Aorta (tissue), 5 donors: ENCODE measurements at regions of chr1 and their contacts with region 1.

Region 1: GRCh38 chr1:186102557-186103148 is 272.4 kb downstream of the TPR start:
- DNase-seq: peak; percentile 55 to 65
- ATAC-seq: peak; percentile 84
- H3K4me3 ChIP-seq: no peak overlapping the region
- H3K27ac ChIP-seq: no peak overlapping the region
- H3K4me1 ChIP-seq: peaks cover 2 to 8% of the 10 kb centered on the region in 2 donors
- H3K27me3 ChIP-seq: no peaks in the 10 kb centered on the region

Region 2: DNA sequence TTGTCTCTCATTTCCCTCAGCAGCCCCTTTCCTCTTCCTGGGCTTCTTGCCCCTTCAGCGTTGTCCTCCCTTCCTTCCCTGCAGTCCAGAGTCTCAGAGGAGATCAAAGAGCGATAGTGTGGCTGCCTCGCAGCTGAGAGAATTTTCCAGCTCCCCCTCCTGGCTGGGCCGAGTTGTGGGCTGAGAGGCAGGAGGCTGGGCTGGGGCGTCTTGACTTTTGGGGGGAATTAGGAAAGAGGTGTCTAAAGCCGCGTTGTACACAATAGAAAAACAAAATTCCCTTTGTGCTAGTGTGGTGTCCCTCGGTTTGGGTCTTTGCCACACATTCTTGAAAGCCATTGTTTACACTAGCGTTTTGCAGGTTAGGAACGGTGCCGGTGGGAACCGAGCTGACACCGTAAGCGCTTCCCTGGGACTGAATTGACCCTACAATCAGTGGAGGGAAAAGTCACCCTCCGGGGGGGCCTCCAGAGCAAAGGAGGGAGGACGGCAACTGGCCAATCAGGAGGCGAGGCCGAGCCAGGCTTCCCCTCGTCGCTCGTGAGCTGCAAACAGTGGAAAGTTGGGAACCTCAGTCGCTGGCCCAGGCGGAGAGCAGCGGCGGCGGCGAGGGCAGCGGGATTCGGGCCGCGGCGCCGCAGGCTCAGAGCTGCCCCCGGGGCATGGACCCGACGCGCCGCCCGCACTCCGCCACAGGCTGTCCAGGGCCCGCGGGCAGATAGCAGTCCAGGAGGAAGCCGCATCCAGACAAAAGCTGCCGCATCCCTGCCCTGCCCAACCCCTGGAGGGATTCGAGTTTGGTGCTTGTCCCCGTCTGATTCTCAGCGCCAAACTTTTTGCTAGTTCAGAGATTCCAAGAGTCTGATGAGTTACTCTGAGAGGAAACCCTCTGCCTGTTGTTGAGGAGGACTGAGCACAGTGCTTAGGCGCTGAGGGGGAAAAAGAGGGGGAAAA is 368.6 kb before region 1 on chr1 and contains the start of gene HMCN1:
- intact Hi-C with region 1: loop called in 1 of 2 experiments (anchors 5 kb)
- DNase-seq: peak; percentile 89 to 93
- ATAC-seq: peak; percentile 93
- H3K4me3 ChIP-seq: peak within 1 kb of the TSS; percentile 94 to 99
- H3K27ac ChIP-seq: peak within 1 kb of the TSS; percentile 90 to 93
- H3K4me1 ChIP-seq: peaks cover 3 to 12% of the 10 kb centered on the region in 2 donors
- H3K27me3 ChIP-seq: no peaks in the 10 kb centered on the region
- total RNA-seq, gene HMCN1: 24.2 to 93.6 TPM

Region 3: DNA sequence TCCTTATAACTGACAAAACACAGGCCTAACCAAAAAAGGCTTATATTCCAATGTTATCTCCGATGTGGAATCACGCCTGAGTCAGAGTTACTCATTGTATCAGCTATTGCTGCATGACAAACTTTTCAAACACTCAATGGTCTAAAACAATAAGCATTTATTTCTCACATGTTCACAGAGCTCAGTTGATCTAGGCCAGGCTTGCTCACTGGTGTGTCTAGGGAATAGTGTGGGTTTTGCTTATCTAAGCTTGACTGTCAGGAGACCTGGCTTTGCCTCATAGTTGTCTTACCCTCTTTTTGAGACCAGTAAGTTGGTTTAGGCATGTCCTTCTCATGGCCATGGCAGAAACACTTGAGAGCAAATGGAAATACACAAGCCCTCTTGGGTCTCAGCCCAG is 237.8 kb before region 1 on chr1:
- intact Hi-C with region 1: loop called in 1 of 2 experiments (anchors 10 kb)
- DNase-seq: no peak
- ATAC-seq: no peak
- H3K4me3 ChIP-seq: no peak overlapping the region
- H3K27ac ChIP-seq: peak overlapping the region; percentile 28 to 59
- H3K4me1 ChIP-seq: peaks cover 10 to 14% of the 10 kb centered on the region in 2 donors
- H3K27me3 ChIP-seq: no peaks in the 10 kb centered on the region